PC-9 (cell line): ENCODE measurements at regions of chr9 and their contacts with region 1.

Region 1: GRCh38 chr9:130535818-130536561 is 43.4 kb upstream of the FUBP3 start:
- DNase-seq: no peak
- H3K4me3 ChIP-seq: no peak overlapping the region
- H3K27ac ChIP-seq: no peak overlapping the region
- H3K4me1 ChIP-seq: peaks cover 6% of the 10 kb centered on the region
- H3K27me3 ChIP-seq: no peaks in the 10 kb centered on the region
- CTCF ChIP-seq: no peak

Region 2: DNA sequence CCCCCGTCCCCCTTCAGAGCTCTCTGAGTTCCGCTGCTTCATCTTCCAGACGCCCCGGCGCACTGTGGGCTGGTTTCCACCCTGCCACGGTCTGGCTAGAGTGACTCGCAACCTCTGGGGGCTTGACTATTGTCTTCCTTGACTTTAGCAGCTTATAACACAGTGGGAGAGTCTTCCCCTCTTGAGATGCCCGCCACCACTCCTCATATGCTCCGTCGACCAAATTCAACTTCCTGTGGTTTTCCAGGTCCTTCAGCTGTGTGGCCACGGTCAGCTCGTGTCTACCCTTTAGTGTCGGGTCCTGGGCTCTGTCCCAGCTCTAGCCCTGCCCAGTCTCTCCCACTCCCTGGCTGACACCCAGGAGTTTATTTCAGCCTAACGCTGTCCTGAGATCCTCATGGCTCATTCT is 392.0 kb before region 1 on chr9:
- CTCF ChIA-PET with region 1: interaction called, 11 read pairs
- POLR2A ChIA-PET with region 1: no interaction called
- intact Hi-C with region 1: no loop called
- DNase-seq: no peak
- H3K4me3 ChIP-seq: no peak overlapping the region
- H3K27ac ChIP-seq: no peak overlapping the region
- H3K4me1 ChIP-seq: no peaks in the 10 kb centered on the region
- H3K27me3 ChIP-seq: no peaks in the 10 kb centered on the region
- CTCF ChIP-seq: no peak

Region 3: GRCh38 chr9:130461218-130461630 is 74.8 kb before region 1 on chr9:
- CTCF ChIA-PET with region 1: no interaction called
- POLR2A ChIA-PET with region 1: no interaction called
- intact Hi-C with region 1: no loop called
- DNase-seq: peak in 1 of 2 experiments; percentile 55
- H3K4me3 ChIP-seq: no peak overlapping the region
- H3K27ac ChIP-seq: no peak overlapping the region
- H3K4me1 ChIP-seq: no peaks in the 10 kb centered on the region
- H3K27me3 ChIP-seq: no peaks in the 10 kb centered on the region
- CTCF ChIP-seq: peak; percentile 93

Region 4: GRCh38 chr9:130578865-130579737 is 43.1 kb after region 1 on chr9 and contains the start of gene FUBP3:
- CTCF ChIA-PET with region 1: no interaction called
- POLR2A ChIA-PET with region 1: interaction called, 8 read pairs
- intact Hi-C with region 1: loop called (anchors 5 kb)
- DNase-seq: peak; percentile 86 to 92
- H3K4me3 ChIP-seq: peak within 1 kb of the TSS; percentile 99
- H3K27ac ChIP-seq: peak within 1 kb of the TSS; percentile 86
- H3K4me1 ChIP-seq: peaks cover 23% of the 10 kb centered on the region
- H3K27me3 ChIP-seq: no peaks in the 10 kb centered on the region
- CTCF ChIP-seq: no peak
- total RNA-seq, gene FUBP3: 50.3 and 75.6 TPM in 2 replicates

Region 5: GRCh38 chr9:130668659-130669058 is 132.7 kb after region 1 on chr9:
- CTCF ChIA-PET with region 1: no interaction called
- POLR2A ChIA-PET with region 1: interaction called, 15 read pairs
- intact Hi-C with region 1: no loop called
- DNase-seq: no peak
- H3K4me3 ChIP-seq: no peak overlapping the region
- H3K27ac ChIP-seq: no peak overlapping the region
- H3K4me1 ChIP-seq: no peaks in the 10 kb centered on the region
- H3K27me3 ChIP-seq: peaks cover 17% of the 10 kb centered on the region
- CTCF ChIP-seq: no peak